ENCODE measurements at regions of chr10 and their contacts with region 1.

Region 1: DNA sequence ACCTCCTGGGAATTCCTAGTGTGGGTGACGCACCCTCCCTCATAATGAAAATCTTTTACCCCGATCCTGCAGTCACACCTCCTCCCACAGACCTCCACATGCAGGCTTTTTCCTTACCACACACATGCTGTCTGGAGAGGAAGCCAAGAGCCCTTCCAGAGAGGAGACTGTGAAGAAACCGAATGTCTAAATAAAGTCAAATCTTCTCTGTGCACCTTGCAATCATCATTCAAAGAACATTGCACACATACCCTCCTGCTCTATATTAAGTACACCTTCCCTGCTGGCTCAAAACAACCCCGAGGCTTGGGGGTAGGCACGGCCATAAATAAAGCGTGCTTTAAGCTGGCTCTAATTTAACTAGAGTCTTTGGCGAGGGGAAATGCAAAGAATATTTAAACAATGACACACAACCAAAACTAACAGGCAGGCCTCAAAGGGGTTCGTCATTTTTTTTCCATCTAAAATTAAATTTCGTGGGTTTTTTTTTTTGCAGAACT is 34.9 kb downstream of the CALML3 start:
- DNase-seq: no peak
- ATAC-seq: no peak
- H3K4me3 ChIP-seq: no peak overlapping the region
- H3K27ac ChIP-seq: no peak overlapping the region
- H3K4me1 ChIP-seq: no peaks in the 10 kb centered on the region
- H3K27me3 ChIP-seq: no peaks in the 10 kb centered on the region
- CTCF ChIP-seq: no peak

Region 2: GRCh38 chr10:5423771-5424170 is 135.9 kb before region 1 on chr10:
- intact Hi-C with region 1: no loop called
- DNase-seq: no peak
- ATAC-seq: no peak
- H3K4me3 ChIP-seq: no peak overlapping the region
- H3K27ac ChIP-seq: no peak overlapping the region
- H3K4me1 ChIP-seq: peaks cover 7% of the 10 kb centered on the region
- H3K27me3 ChIP-seq: no peaks in the 10 kb centered on the region
- CTCF ChIP-seq: no peak

Region 3: GRCh38 chr10:5601826-5602495 is 42.3 kb after region 1 on chr10:
- intact Hi-C with region 1: loop called in 1 of 2 experiments (anchors 5 kb)
- DNase-seq: peak in 1 of 2 donors; percentile 53
- ATAC-seq: peak; percentile 40 to 93 (median 85)
- H3K4me3 ChIP-seq: no peak overlapping the region
- H3K27ac ChIP-seq: no peak overlapping the region
- H3K4me1 ChIP-seq: peaks cover 4% of the 10 kb centered on the region
- H3K27me3 ChIP-seq: no peaks in the 10 kb centered on the region
- CTCF ChIP-seq: no peak

Region 4: GRCh38 chr10:5684318-5684970 is 124.8 kb after region 1 on chr10 and contains the start of gene TASOR2:
- intact Hi-C with region 1: no loop called
- DNase-seq: peak; percentile 99
- ATAC-seq: peak; percentile 96 to 98 (median 98)
- H3K4me3 ChIP-seq: peak within 1 kb of the TSS; percentile 86
- H3K27ac ChIP-seq: peak within 1 kb of the TSS; percentile 97
- H3K4me1 ChIP-seq: peaks cover 21% of the 10 kb centered on the region
- H3K27me3 ChIP-seq: no peaks in the 10 kb centered on the region
- CTCF ChIP-seq: no peak
- total RNA-seq, gene TASOR2: 31.5 to 45.6 (median 39.0) TPM

Region 5: DNA sequence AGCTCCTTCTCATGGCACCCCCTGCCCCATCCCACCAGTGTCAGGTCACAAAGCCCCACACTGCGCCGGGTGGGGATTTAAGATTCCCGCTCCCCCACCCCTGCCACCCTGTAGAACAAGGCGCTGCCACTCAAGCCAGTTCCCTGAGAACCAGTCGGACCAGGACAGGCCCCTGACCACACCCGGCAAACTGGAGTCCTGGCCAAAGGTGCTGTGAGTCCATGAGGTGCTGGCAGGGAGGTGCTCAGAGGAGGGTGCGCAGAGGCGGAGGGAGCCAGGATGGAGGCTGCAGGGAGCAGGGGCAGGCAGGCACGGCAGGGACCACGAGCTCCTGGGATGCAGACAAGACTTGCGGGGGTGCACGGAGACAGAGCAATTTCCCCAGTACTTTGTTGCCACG is 273.2 kb after region 1 on chr10:
- intact Hi-C with region 1: no loop called
- DNase-seq: no peak
- ATAC-seq: no peak
- H3K4me3 ChIP-seq: no peak overlapping the region
- H3K27ac ChIP-seq: no peak overlapping the region
- H3K4me1 ChIP-seq: no peaks in the 10 kb centered on the region
- H3K27me3 ChIP-seq: no peaks in the 10 kb centered on the region
- CTCF ChIP-seq: no peak